ENCODE measurements at regions of chr16 and their contacts with region 1.

Region 1: GRCh38 chr16:72124761-72125634 is 31.4 kb downstream of the DHX38 start:
- H3K4me3 ChIP-seq: no peak overlapping the region
- H3K27ac ChIP-seq: no peak overlapping the region
- H3K4me1 ChIP-seq: no peaks in the 10 kb centered on the region
- CTCF ChIP-seq: peak; percentile 81

Region 2: DNA sequence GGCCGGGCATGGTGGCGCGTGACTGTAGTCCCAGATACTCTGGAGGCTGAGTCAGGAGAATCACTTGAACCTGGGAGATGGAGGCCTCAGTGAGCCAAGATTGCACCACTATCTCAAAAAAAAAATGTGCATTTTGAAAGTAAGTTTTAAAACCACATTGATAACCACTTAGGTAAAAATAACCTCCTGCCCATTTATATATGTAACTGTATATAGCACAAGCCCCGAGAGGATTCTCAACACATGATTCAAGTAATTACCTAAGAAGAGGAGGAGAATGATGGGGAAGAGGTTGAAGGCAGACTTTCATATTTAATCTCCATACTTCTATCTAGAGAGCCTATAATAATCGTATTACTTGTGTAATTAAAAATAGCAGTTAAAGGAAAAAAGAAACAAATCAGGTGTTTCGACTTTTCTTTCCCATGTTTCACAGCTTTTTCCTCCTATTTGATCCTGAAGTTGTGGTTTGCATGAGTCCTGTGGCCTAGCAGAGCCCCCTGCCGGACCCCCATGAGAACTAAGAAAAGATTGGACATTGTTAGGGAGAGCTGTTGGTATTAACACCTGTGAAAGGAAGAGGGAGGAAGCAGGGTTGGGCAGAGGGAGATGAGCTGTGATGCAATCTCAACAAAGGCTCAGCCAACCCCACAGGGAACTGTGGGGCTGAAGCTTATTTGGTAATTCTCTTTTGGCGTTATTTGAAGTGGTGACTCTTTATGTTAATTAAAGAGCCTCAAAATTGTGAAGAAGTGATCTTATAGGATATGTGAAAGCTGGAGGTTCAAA is 24.9 kb after region 1 on chr16:
- CTCF ChIA-PET with region 1: interaction called, 20 read pairs
- POLR2A ChIA-PET with region 1: no interaction called
- H3K4me3 ChIP-seq: no peak overlapping the region
- H3K27ac ChIP-seq: no peak overlapping the region
- H3K4me1 ChIP-seq: no peaks in the 10 kb centered on the region
- CTCF ChIP-seq: no peak

Region 3: GRCh38 chr16:73878611-73879010 is 1753.6 kb after region 1 on chr16:
- CTCF ChIA-PET with region 1: interaction called, 10 read pairs
- POLR2A ChIA-PET with region 1: no interaction called
- H3K4me3 ChIP-seq: no peak overlapping the region
- H3K27ac ChIP-seq: no peak overlapping the region
- H3K4me1 ChIP-seq: 0 out of 2 replicates have a peak, but pooled peaks cover under 1% of the 10 kb centered on the region
- CTCF ChIP-seq: 0 out of 2 replicates have a peak, but pooled peaks have one; percentile 36

Measured in HEK293 (cell line).